ENCODE measurements at regions of chr3 and their contacts with region 1.

Region 1: DNA sequence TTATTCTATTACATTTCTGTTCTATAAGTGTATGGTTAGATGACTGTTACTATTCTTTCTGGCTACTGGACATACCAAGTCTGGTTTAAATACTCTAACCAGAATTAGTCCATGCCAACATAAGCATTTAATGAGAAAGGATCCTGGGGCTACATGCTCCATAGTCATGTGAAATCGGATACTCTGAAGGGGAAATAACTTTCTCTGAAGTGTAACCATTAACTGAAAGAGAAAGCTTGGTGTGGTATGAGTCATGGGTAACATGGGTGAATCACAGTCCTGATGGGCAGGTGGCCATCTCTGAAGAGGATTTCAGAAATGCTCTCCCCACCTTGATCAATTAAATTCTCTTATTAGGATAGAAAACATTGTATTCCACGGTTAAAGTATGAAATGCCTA is 69.4 kb downstream of the FHIT start:
- DNase-seq: peak; percentile 95
- ATAC-seq: peak; percentile 99
- H3K4me3 ChIP-seq: no peak overlapping the region
- H3K27ac ChIP-seq: no peak overlapping the region
- H3K4me1 ChIP-seq: peaks cover 21% of the 10 kb centered on the region
- H3K27me3 ChIP-seq: no peaks in the 10 kb centered on the region
- CTCF ChIP-seq: no peak

Region 2: GRCh38 chr3:61251174-61251972 is 69.5 kb after region 1 on chr3 and contains the start of gene FHIT:
- CTCF ChIA-PET with region 1: no interaction called
- POLR2A ChIA-PET with region 1: no interaction called
- intact Hi-C with region 1: loop called (anchors 5 kb)
- DNase-seq: peak; percentile 95
- ATAC-seq: peak; percentile 98
- H3K4me3 ChIP-seq: peak within 1 kb of the TSS; percentile 69
- H3K27ac ChIP-seq: no peak within 1 kb of the TSS
- H3K4me1 ChIP-seq: peaks cover 16% of the 10 kb centered on the region
- H3K27me3 ChIP-seq: no peaks in the 10 kb centered on the region
- CTCF ChIP-seq: no peak
- total RNA-seq, gene FHIT: 1.2 and 3.6 TPM in 2 replicates